ENCODE measurements at regions of chr5 and their contacts with region 1.

Region 1: GRCh38 chr5:17132444-17133083 is 84.9 kb upstream of the BASP1 start:
- DNase-seq: peak; percentile 37
- CTCF ChIP-seq: peak; percentile 42

Region 2: DNA sequence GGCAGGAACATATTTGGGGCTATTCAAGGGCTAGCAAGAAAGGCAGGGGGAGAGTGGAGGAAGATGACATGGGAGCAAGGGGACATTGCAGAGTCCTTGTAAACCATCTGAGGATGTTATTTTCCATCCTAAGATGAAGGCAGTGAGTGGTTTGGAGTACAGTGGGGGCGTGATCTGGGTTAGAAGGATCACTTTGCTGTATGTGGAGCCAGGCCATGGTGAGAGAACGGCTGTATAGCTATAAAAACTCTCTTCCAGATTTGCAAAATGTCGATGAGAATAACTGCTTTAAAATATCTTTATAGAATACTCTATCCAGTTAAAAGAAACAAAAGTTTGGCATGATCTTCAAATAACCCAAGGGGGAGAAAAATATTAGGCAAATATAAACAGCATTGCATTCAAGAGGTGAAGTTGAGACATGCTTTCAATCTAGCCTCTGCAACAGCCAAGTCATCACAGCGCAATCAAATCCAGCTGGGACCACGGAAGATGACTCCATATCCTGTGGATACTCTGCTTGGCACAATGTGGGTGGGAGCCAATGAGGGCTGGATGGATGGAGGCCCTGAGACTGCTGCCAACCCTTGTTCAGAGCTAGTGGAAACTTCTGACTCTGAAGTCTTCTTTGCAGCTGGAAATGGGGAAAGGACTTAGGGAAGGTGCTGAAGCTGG is 26.7 kb before region 1 on chr5:
- CTCF ChIA-PET with region 1: interaction called, 10 read pairs
- POLR2A ChIA-PET with region 1: no interaction called
- DNase-seq: no peak
- CTCF ChIP-seq: no peak

Region 3: GRCh38 chr5:17113163-17113958 is 19.2 kb before region 1 on chr5:
- CTCF ChIA-PET with region 1: interaction called, 18 read pairs
- POLR2A ChIA-PET with region 1: no interaction called
- DNase-seq: no peak
- CTCF ChIP-seq: no peak

Region 4: GRCh38 chr5:17118631-17119030 is 13.9 kb before region 1 on chr5:
- CTCF ChIA-PET with region 1: interaction called, 18 read pairs
- POLR2A ChIA-PET with region 1: no interaction called
- DNase-seq: peak; percentile 18
- CTCF ChIP-seq: no peak

Region 5: DNA sequence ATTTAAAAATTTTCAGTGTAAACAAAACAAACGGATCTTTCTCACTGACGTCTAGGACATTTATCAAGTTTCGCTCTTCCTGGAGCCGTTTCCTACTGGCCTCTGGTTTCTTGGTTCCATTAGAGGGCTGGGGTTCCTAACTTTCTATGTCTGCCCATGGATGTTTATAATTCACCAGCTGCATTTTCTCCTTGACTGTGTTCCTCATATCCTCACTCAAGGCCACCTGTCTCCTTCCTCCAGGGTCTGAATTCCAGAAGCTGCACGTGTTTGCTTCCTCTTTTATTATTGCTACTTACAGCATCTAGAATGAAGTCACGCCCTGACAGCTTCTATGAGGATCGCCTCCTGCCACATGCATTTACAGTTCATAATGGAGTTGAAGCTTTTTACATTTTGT is 10.8 kb after region 1 on chr5:
- CTCF ChIA-PET with region 1: interaction called, 18 read pairs
- POLR2A ChIA-PET with region 1: no interaction called
- DNase-seq: no peak
- CTCF ChIP-seq: no peak

Region 6: GRCh38 chr5:17709011-17709705 is 576.6 kb after region 1 on chr5:
- CTCF ChIA-PET with region 1: no interaction called
- POLR2A ChIA-PET with region 1: no interaction called
- DNase-seq: no peak
- CTCF ChIP-seq: no peak

Measured in GM10248 (cell line).